ENCODE measurements at regions of chr3 and their contacts with region 1.

Region 1: DNA sequence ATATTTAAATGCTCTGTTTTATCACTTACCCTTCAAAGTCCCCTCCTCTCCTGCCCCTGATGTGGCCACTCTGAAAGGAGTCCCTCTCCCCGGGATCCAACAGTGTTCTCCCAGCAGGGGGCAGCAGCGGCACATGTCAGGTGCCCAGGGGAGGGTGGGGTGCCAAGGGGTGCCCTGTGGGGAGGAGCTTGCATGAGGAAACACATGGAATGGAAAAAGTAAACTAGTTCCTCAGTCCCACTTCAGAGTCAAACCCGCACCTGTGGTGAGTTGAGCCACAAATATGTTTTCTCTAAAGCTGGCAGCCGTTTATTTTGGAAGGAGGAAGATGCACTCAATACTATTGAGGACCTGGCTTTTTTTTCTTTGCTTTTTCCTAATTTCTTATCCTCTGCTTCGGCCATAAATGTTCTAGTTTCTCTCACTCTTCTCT is 30.1 kb upstream of the NRROS start:
- DNase-seq: peak; percentile 87 to 95 (median 95)
- ATAC-seq: peak; percentile 94 to 95
- H3K4me3 ChIP-seq: no peak overlapping the region
- H3K27ac ChIP-seq: no peak overlapping the region
- H3K4me1 ChIP-seq: no peaks in the 10 kb centered on the region
- H3K27me3 ChIP-seq: no peaks in the 10 kb centered on the region

Region 2: DNA sequence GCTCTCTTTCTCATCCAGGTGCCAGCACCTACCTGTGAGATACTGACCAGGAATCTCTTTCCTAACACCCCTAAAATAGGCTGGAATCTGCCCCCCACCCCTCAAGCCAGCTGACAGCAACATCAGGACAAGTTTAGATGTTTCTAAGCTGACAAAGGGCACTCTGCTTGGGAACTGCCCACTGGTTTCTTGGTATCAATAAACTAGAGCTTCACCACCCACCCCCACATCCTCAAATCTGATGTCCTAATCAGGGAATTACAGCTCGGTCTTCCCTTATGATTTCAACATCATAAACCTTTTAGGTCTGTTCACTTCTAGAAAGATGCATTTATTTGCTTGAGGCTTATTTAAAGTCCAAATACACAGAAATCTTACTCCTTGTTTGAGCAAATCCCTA is 68.0 kb after region 1 on chr3:
- intact Hi-C with region 1: loop called in 2 of 4 experiments (anchors 5 to 10 kb)
- DNase-seq: no peak
- ATAC-seq: no peak
- H3K4me3 ChIP-seq: no peak overlapping the region
- H3K27ac ChIP-seq: no peak overlapping the region
- H3K4me1 ChIP-seq: no peaks in the 10 kb centered on the region
- H3K27me3 ChIP-seq: no peaks in the 10 kb centered on the region

Region 3: GRCh38 chr3:196684548-196685407 is 75.4 kb after region 1 on chr3:
- intact Hi-C with region 1: loop called (anchors 2 to 10 kb)
- DNase-seq: peak in 2 of 3 donors; percentile 64 to 76
- ATAC-seq: peak; percentile 61 to 62
- H3K4me3 ChIP-seq: no peak overlapping the region
- H3K27ac ChIP-seq: no peak overlapping the region
- H3K4me1 ChIP-seq: no peaks in the 10 kb centered on the region
- H3K27me3 ChIP-seq: no peaks in the 10 kb centered on the region

Region 4: GRCh38 chr3:196694941-196695848 is 85.8 kb after region 1 on chr3:
- intact Hi-C with region 1: no loop called
- DNase-seq: no peak
- ATAC-seq: peak; percentile 14 to 34
- H3K4me3 ChIP-seq: no peak overlapping the region
- H3K27ac ChIP-seq: no peak overlapping the region
- H3K4me1 ChIP-seq: no peaks in the 10 kb centered on the region
- H3K27me3 ChIP-seq: no peaks in the 10 kb centered on the region

Region 5: GRCh38 chr3:196711838-196712513 is 102.6 kb after region 1 on chr3 and contains the starts of genes CEP19 and PIGX:
- intact Hi-C with region 1: no loop called
- DNase-seq: peak; percentile 86 to 95 (median 94)
- ATAC-seq: peak; percentile 98
- H3K4me3 ChIP-seq: peak within 1 kb of the TSS; percentile 89
- H3K27ac ChIP-seq: peak within 1 kb of the TSS; percentile 92
- H3K4me1 ChIP-seq: peaks cover 4% of the 10 kb centered on the region
- H3K27me3 ChIP-seq: no peaks in the 10 kb centered on the region
- total RNA-seq, gene CEP19: 1.3 to 2.4 (median 1.7) TPM
- total RNA-seq, gene PIGX: 15.9 to 18.4 (median 16.4) TPM